CD4-positive, alpha-beta T cell (primary cell): ENCODE measurements at regions of chr12 and their contacts with region 1.

Region 1: GRCh38 chr12:81987371-81987770 is 228.2 kb upstream of the PPFIA2 start:
- DNase-seq: no peak
- ATAC-seq: no peak
- H3K4me3 ChIP-seq: no peak overlapping the region
- H3K4me3 Mint-ChIP-seq: no peak overlapping the region
- H3K27ac ChIP-seq: no peak overlapping the region
- H3K27ac Mint-ChIP-seq: no peak overlapping the region
- H3K4me1 ChIP-seq: no peaks in the 10 kb centered on the region
- H3K4me1 Mint-ChIP-seq: peaks cover 1% of the 10 kb centered on the region
- H3K27me3 ChIP-seq: no peaks in the 10 kb centered on the region
- H3K27me3 Mint-ChIP-seq: no peaks in the 10 kb centered on the region
- CTCF ChIP-seq: no peak

Region 2: DNA sequence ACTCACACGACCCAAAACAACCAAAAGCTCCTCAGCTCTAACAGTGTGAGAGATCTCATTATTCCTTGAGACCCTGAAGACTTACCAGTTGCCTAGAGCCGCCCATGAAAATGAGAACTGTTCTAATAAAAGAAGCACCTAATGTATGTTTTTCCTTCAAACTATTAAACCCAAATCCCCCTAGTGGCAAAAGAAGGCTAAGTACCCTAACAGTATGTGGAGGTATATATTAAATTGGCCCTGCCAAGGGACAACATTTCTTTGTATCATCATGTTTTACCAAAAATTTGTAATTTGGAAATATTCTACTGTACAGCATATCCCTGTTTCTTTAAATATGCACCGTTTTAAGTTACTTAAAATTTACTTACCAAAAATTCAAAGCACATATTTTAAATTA is 190.3 kb before region 1 on chr12:
- CTCF ChIA-PET with region 1: no interaction called
- POLR2A ChIA-PET with region 1: no interaction called
- intact Hi-C with region 1: loop called in 1 of 2 experiments (anchors 10 kb)
- DNase-seq: peak in 1 of 14 experiments; percentile 13
- ATAC-seq: no peak
- H3K4me3 ChIP-seq: no peak overlapping the region
- H3K4me3 Mint-ChIP-seq: no peak overlapping the region
- H3K27ac ChIP-seq: no peak overlapping the region
- H3K27ac Mint-ChIP-seq: no peak overlapping the region
- H3K4me1 ChIP-seq: no peaks in the 10 kb centered on the region
- H3K4me1 Mint-ChIP-seq: no peaks in the 10 kb centered on the region
- H3K27me3 ChIP-seq: no peaks in the 10 kb centered on the region
- H3K27me3 Mint-ChIP-seq: peaks cover 20% of the 10 kb centered on the region
- CTCF ChIP-seq: no peak